ENCODE measurements at regions of chr16 and their contacts with region 1.

Region 1: DNA sequence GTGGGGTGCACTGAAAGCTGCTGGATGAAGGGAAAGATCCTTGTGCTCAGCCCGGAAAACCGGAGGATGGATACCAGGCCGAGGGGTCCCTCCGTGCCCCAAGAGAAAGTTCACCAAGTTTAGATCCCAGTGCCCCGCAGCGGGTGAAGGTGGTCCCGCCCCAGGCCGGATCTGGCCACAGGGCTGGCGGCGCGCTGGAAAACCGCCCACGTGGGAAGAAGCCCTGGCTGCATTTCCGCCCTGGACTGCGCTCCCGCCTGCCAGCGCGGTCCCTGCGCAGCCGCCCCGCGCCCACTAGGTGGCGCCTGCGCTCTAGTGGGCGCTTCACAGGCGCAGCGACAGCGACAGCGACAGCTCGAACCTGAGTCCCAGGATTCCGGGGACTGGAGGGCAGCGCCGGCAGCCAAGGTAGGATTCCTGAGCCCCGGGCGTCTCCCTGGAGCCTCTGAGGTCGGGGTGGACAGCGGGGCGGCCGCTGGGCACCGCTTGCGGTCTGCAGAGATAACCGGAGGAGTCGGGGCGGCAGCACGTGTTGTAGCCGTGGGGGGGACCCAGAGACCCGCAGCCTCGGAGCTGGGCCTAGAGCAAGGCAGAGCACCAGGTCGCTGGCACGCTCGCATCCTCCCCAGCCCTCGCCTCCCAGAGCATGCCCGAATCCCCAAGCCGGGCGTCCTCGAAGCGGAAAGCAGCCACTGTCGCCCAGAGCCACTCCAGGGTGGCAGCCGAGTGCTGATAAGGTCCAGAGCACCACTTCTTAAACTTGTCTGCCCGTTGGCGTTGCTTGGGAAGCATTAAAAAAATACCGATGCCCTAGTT is at the start of gene CHD9:
- DNase-seq: peak; percentile 81 to 88 (median 88)
- H3K4me3 ChIP-seq: peak within 1 kb of the TSS; percentile 69 to 89 (median 84)
- H3K27ac ChIP-seq: peak within 1 kb of the TSS; percentile 40 to 81
- H3K4me1 ChIP-seq: peaks cover 3 to 39% (median 25%) of the 10 kb centered on the region in 4 experiments
- H3K27me3 ChIP-seq: no peaks in the 10 kb centered on the region

Region 2: GRCh38 chr16:53022374-53022773 is 32.5 kb before region 1 on chr16:
- CTCF ChIA-PET with region 1: no interaction called
- POLR2A ChIA-PET with region 1: no interaction called
- DNase-seq: peak; percentile 25 to 57 (median 51)
- H3K4me3 ChIP-seq: no peak overlapping the region
- H3K27ac ChIP-seq: no peak overlapping the region
- H3K4me1 ChIP-seq: no peaks in the 10 kb centered on the region
- H3K27me3 ChIP-seq: peaks cover 0 to 2% (median 0%) of the 10 kb centered on the region in 5 experiments

Region 3: GRCh38 chr16:53080345-53081031 is 25.6 kb after region 1 on chr16:
- CTCF ChIA-PET with region 1: interaction called, 73 read pairs
- POLR2A ChIA-PET with region 1: no interaction called
- DNase-seq: no peak
- H3K4me3 ChIP-seq: no peak overlapping the region
- H3K27ac ChIP-seq: no peak overlapping the region
- H3K4me1 ChIP-seq: peaks cover 2 to 6% (median 4%) of the 10 kb centered on the region in 4 experiments
- H3K27me3 ChIP-seq: no peaks in the 10 kb centered on the region

Region 4: GRCh38 chr16:53099318-53100130 is 44.6 kb after region 1 on chr16:
- CTCF ChIA-PET with region 1: interaction called, 73 read pairs
- POLR2A ChIA-PET with region 1: interaction called, 28 read pairs
- DNase-seq: peak; percentile 51 to 93 (median 89)
- H3K4me3 ChIP-seq: peak overlapping the region; percentile 21 to 77 (median 63)
- H3K27ac ChIP-seq: peak overlapping the region; percentile 80 to 90
- H3K4me1 ChIP-seq: peaks cover 10 to 40% (median 36%) of the 10 kb centered on the region in 4 experiments
- H3K27me3 ChIP-seq: no peaks in the 10 kb centered on the region

Region 5: DNA sequence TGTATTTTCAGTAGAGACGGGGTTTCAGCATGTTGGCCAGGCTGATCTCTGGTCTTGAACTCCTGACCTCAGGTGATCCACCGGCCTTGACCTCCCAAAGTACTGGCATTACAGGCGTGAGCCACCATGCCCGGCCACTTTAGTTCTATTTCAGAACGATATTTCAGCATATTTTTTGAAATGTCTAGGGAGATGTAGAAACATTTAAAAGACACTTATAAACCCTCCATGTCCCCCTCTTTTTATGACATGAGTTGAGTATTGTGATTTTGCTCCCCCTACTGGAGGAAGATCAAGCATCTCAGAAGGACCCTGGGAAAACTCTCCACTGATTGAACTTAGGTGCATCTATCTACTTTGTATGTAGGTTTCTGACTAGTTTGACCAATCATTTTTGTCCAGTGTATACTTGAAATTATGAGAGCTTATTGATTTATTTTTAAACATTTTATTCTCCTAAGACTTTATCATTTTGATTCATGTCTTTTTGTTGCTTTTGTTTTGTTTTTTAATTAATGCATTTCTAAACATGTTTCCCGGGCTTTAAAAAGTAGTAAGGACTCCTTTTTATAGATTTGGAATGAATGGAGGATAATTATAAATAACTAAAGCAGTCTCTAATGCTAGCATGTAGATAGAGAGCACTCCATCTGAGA is 105.0 kb after region 1 on chr16:
- CTCF ChIA-PET with region 1: interaction called, 49 read pairs
- POLR2A ChIA-PET with region 1: interaction called, 3 read pairs
- DNase-seq: peak; percentile 75 to 82 (median 77)
- H3K4me3 ChIP-seq: no peak overlapping the region
- H3K27ac ChIP-seq: no peak overlapping the region
- H3K4me1 ChIP-seq: no peaks in the 10 kb centered on the region
- H3K27me3 ChIP-seq: no peaks in the 10 kb centered on the region

Region 6: DNA sequence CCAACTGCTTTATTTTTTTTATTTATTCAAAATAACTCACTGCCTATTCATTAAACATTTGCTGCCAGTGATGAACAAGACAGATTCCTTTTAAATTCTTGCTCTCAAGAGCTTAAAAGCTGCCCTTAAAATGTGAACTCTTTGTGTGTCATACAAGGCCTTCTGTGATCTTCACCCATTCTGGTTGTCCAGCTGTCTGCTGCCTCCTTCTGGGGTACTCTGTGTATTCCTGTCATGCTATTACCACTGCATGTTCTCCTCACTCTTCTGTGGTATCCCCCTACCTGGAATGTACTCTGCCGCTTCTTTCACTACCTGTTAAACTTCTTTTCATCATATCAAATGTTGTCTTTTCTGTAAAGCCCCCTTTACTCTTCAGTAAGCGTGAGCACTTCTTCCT is 165.7 kb after region 1 on chr16:
- CTCF ChIA-PET with region 1: interaction called, 40 read pairs
- POLR2A ChIA-PET with region 1: no interaction called
- DNase-seq: peak; percentile 67 to 74 (median 72)
- H3K4me3 ChIP-seq: peak overlapping the region in 1 of 7 experiments; percentile 30
- H3K27ac ChIP-seq: peak overlapping the region in 1 of 2 experiments; percentile 80
- H3K4me1 ChIP-seq: peaks cover 39 to 64% (median 51%) of the 10 kb centered on the region in 4 experiments
- H3K27me3 ChIP-seq: no peaks in the 10 kb centered on the region

Region 7: DNA sequence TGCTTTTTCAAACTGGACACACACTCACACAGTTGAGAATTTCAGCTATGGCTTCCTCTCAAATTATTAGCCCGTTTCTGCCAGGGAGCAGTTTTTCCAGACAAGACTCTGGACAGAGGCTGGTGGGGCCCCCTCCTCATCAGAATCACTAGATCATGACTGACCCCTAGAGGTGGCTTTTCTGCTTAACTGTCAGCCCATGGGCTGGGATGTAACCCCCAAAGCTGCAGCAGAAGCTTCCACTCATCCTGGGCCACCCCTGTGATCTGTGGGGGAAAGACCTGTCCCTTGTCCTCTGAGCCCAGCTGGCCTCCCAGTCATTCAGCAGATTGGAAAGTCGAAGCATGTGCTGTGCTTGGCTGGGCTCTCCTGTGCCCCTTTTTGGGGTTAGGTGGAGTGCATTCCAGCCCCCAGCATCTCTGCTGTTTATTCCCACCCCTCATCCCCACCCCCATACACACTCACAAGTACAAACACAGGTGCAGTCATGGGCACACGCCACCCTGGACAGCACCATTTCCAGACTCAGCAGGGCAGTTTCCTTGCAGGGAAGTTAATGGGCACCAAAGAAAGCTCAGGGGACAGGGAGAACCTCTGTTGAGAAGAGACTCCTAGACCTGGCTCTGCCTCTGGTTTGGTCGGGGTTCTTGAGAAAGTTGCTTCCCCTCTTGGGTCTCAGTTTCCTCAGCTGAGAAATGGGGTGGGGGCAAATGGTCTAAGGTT is 301.8 kb after region 1 on chr16:
- CTCF ChIA-PET with region 1: no interaction called
- POLR2A ChIA-PET with region 1: no interaction called
- DNase-seq: no peak
- H3K4me3 ChIP-seq: no peak overlapping the region
- H3K27ac ChIP-seq: no peak overlapping the region
- H3K4me1 ChIP-seq: no peaks in the 10 kb centered on the region
- H3K27me3 ChIP-seq: peaks cover 0 to 15% (median 2%) of the 10 kb centered on the region in 5 experiments